ENCODE measurements at regions of chr21 and their contacts with region 1.

Region 1: DNA sequence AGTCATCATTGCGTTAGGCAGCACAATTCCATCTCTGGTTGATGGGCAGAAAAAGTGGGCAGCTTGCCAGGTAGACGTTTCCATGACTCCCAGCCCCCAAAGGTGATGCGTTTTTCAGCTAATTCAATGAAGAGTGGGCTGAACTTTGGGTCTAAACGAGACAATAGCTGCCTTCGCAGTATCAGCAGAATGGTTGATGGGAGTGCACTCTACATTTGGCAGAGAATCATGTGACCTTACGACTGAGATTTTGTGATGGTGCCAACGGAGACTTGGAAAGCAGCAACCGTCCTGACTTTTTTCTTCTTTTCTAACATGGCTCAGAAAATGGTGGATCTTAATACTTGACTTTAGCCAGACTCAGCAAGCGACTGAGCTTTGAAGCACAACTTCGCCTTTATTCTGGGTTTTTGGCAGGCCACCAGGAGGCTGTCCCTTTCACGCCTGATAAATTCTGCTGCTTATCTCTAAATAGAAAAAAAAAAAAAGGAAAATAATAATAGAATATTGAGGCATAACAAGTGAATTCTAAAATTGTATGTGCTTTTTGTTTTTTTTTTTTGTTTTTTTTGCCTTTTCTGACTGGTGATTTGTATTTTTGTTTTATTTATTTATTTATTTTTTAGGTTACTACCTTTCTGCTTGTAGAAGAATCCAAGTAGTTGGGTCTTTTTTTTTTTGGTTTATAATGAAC is 804.8 kb downstream of the USP25 start:
- DNase-seq: peak; percentile 82
- H3K4me3 ChIP-seq: no peak overlapping the region
- H3K27ac ChIP-seq: no peak overlapping the region
- H3K4me1 ChIP-seq: peaks cover 59% of the 10 kb centered on the region
- H3K27me3 ChIP-seq: no peaks in the 10 kb centered on the region
- CTCF ChIP-seq: no peak
- POLR2A ChIP-seq: no peak

Region 2: GRCh38 chr21:16082038-16082816 is 452.3 kb before region 1 on chr21:
- CTCF ChIA-PET with region 1: no interaction called
- POLR2A ChIA-PET with region 1: no interaction called
- dilution Hi-C with region 1: no loop called
- intact Hi-C with region 1: no loop called
- DNase-seq: peak; percentile 78
- H3K4me3 ChIP-seq: no peak overlapping the region
- H3K27ac ChIP-seq: peak overlapping the region; percentile 48
- H3K4me1 ChIP-seq: peaks cover 8% of the 10 kb centered on the region
- H3K27me3 ChIP-seq: no peaks in the 10 kb centered on the region
- CTCF ChIP-seq: peak in 1 of 2 donors; percentile 4
- POLR2A ChIP-seq: no peak

Region 3: DNA sequence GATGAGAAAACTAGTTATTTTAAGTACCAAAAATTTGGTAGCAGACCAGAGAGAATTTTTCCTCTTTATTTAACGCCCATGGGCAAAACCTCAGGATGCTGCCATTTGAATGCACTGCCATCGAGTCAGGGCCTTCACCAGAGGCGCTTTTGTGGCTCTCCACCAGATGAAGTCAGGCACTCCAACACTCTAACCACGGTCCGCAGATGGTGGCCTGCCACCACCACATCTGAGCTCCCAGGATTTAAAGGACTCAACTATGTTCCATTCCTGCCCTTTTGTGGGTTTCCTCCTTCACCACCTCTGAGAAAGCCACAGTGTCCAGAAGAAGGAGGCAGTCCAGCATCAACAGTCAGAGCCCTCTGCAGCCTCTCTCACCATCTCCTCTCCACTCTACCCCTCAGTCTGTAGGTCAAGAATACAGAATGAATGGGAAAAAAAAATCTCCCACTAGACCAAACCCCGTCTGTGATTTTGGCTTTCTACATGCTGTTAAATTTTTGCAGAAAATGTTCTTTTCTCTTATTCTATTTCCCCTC is 157.4 kb before region 1 on chr21:
- CTCF ChIA-PET with region 1: no interaction called
- POLR2A ChIA-PET with region 1: no interaction called
- dilution Hi-C with region 1: no loop called
- intact Hi-C with region 1: no loop called
- DNase-seq: no peak
- H3K4me3 ChIP-seq: no peak overlapping the region
- H3K27ac ChIP-seq: no peak overlapping the region
- H3K4me1 ChIP-seq: no peaks in the 10 kb centered on the region
- H3K27me3 ChIP-seq: no peaks in the 10 kb centered on the region
- CTCF ChIP-seq: no peak
- POLR2A ChIP-seq: no peak

Region 4: GRCh38 chr21:16426936-16427335 is 107.6 kb before region 1 on chr21:
- CTCF ChIA-PET with region 1: no interaction called
- POLR2A ChIA-PET with region 1: no interaction called
- dilution Hi-C with region 1: no loop called
- intact Hi-C with region 1: loop called (anchors 5 kb)
- DNase-seq: peak; percentile 65
- H3K4me3 ChIP-seq: peak overlapping the region in 1 of 3 experiments; percentile 21
- H3K27ac ChIP-seq: peak overlapping the region; percentile 85
- H3K4me1 ChIP-seq: peaks cover 52% of the 10 kb centered on the region
- H3K27me3 ChIP-seq: no peaks in the 10 kb centered on the region
- CTCF ChIP-seq: no peak
- POLR2A ChIP-seq: no peak

Region 5: GRCh38 chr21:16496609-16497008 is 37.9 kb before region 1 on chr21:
- CTCF ChIA-PET with region 1: no interaction called
- POLR2A ChIA-PET with region 1: no interaction called
- dilution Hi-C with region 1: no loop called
- intact Hi-C with region 1: loop called (anchors 2 kb)
- DNase-seq: peak; percentile 75
- H3K4me3 ChIP-seq: no peak overlapping the region
- H3K27ac ChIP-seq: no peak overlapping the region
- H3K4me1 ChIP-seq: peaks cover 12% of the 10 kb centered on the region
- H3K27me3 ChIP-seq: no peaks in the 10 kb centered on the region
- CTCF ChIP-seq: no peak
- POLR2A ChIP-seq: no peak

Region 6: GRCh38 chr21:16522490-16522889 is 12.1 kb before region 1 on chr21:
- CTCF ChIA-PET with region 1: no interaction called
- POLR2A ChIA-PET with region 1: no interaction called
- dilution Hi-C with region 1: no loop called
- intact Hi-C with region 1: no loop called
- DNase-seq: no peak
- H3K4me3 ChIP-seq: no peak overlapping the region
- H3K27ac ChIP-seq: no peak overlapping the region
- H3K4me1 ChIP-seq: no peaks in the 10 kb centered on the region
- H3K27me3 ChIP-seq: no peaks in the 10 kb centered on the region
- CTCF ChIP-seq: no peak
- POLR2A ChIP-seq: no peak

Region 7: DNA sequence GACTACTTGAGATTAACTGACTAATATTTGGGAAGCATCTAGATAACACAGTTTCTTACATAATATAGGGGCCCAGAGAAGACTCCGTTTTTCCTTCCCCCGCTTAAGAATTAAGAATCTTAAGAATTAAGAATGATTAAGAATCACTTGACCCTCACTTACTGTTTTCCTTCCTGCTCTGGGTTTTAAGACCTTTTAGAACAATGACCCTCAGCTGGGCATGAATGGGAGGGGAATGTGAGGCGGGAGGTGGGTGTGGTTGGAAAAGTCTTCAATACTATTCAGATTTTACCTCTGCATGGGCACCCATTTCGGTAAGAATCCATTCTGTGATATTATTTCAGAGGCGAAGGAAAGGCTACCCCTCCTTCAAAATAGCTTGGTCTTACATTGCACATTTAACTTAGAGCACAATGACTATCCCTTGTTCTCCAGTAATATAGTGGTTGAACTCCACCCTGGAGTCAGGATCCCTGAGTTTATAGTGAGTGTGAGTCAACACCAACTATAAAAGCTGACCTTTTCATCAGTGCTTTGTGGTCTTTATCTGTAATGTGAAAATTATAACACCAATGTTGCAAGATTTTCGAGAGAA is 16.6 kb after region 1 on chr21:
- CTCF ChIA-PET with region 1: interaction called, 6 read pairs
- POLR2A ChIA-PET with region 1: no interaction called
- dilution Hi-C with region 1: no loop called
- intact Hi-C with region 1: loop called (anchors 2 kb)
- DNase-seq: peak; percentile 54
- H3K4me3 ChIP-seq: no peak overlapping the region
- H3K27ac ChIP-seq: peak overlapping the region; percentile 71
- H3K4me1 ChIP-seq: peaks cover 41% of the 10 kb centered on the region
- H3K27me3 ChIP-seq: no peaks in the 10 kb centered on the region
- CTCF ChIP-seq: no peak
- POLR2A ChIP-seq: no peak

Region 8: GRCh38 chr21:16588433-16588860 is 53.9 kb after region 1 on chr21:
- CTCF ChIA-PET with region 1: no interaction called
- POLR2A ChIA-PET with region 1: no interaction called
- dilution Hi-C with region 1: no loop called
- intact Hi-C with region 1: loop called (anchors 5 kb)
- DNase-seq: no peak
- H3K4me3 ChIP-seq: peak overlapping the region in 1 of 3 experiments; percentile 40
- H3K27ac ChIP-seq: peak overlapping the region; percentile 74
- H3K4me1 ChIP-seq: peaks cover 32% of the 10 kb centered on the region
- H3K27me3 ChIP-seq: no peaks in the 10 kb centered on the region
- CTCF ChIP-seq: no peak
- POLR2A ChIP-seq: no peak

Region 9: GRCh38 chr21:16650714-16651366 is 116.3 kb after region 1 on chr21:
- CTCF ChIA-PET with region 1: no interaction called
- POLR2A ChIA-PET with region 1: no interaction called
- dilution Hi-C with region 1: no loop called
- intact Hi-C with region 1: no loop called
- DNase-seq: no peak
- H3K4me3 ChIP-seq: no peak overlapping the region
- H3K27ac ChIP-seq: no peak overlapping the region
- H3K4me1 ChIP-seq: no peaks in the 10 kb centered on the region
- H3K27me3 ChIP-seq: no peaks in the 10 kb centered on the region
- CTCF ChIP-seq: no peak
- POLR2A ChIP-seq: no peak